IMR-90 (cell line): ENCODE measurements at regions of chr7 and their contacts with region 1.

Region 1: GRCh38 chr7:156969972-156970420 is 20.5 kb downstream of the NOM1 start:
- DNase-seq: peak; percentile 9
- ATAC-seq: peak; percentile 82
- H3K4me3 ChIP-seq: no peak overlapping the region
- H3K27ac ChIP-seq: no peak overlapping the region
- H3K4me1 ChIP-seq: no peaks in the 10 kb centered on the region
- H3K27me3 ChIP-seq: no peaks in the 10 kb centered on the region
- CTCF ChIP-seq: peak; percentile 45
- POLR2A ChIP-seq: no peak
- RAD21 ChIP-seq: peak; percentile 31; the same call in 1 of the 2 replicates

Region 2: DNA sequence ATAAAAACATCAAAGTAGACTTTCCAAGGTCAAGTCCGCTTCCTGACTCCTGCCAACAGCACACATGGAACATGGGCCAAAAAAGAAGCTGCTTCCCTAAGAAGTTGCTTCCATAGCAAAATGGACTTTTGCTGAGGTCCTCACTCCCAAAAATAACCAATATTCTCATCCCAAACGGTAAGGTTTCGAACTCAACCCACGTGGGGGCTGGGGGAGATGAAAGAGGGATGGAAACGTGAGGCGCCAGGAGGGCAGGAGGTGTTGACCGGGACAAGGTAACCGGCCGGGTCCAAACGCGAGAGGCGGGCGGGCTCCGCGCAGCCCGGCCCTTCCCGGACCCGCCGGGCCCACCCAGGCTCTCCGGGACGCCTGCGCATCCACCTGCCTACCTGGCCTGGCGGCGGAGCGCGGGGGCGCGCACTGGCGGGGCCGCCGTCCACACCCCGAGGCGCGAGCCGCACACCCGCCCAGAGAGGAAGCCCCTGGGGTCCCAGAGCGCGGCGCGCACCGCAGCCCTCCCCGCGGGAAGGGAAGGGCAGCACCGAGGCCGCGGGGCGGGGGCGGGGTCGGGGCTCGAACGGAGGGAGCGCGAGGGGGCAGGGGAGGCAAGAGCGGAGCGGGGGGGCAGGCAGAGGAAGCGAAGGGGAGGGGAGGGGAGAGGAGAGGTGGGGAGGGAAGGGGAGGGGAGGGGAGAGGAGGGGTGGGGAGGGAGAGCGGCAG is 77.8 kb before region 1 on chr7:
- CTCF ChIA-PET with region 1: no interaction called
- POLR2A ChIA-PET with region 1: no interaction called
- dilution Hi-C with region 1: no loop called
- in situ Hi-C with region 1: no loop called
- intact Hi-C with region 1: no loop called
- DNase-seq: no peak
- ATAC-seq: peak; percentile 30
- H3K4me3 ChIP-seq: peak overlapping the region; percentile 90
- H3K27ac ChIP-seq: no peak overlapping the region; the same call in 1 of the 2 replicates
- H3K4me1 ChIP-seq: peaks cover 2% of the 10 kb centered on the region; the same call in 1 of the 2 replicates
- H3K27me3 ChIP-seq: no peaks in the 10 kb centered on the region
- CTCF ChIP-seq: no peak
- POLR2A ChIP-seq: no peak
- RAD21 ChIP-seq: no peak

Region 3: DNA sequence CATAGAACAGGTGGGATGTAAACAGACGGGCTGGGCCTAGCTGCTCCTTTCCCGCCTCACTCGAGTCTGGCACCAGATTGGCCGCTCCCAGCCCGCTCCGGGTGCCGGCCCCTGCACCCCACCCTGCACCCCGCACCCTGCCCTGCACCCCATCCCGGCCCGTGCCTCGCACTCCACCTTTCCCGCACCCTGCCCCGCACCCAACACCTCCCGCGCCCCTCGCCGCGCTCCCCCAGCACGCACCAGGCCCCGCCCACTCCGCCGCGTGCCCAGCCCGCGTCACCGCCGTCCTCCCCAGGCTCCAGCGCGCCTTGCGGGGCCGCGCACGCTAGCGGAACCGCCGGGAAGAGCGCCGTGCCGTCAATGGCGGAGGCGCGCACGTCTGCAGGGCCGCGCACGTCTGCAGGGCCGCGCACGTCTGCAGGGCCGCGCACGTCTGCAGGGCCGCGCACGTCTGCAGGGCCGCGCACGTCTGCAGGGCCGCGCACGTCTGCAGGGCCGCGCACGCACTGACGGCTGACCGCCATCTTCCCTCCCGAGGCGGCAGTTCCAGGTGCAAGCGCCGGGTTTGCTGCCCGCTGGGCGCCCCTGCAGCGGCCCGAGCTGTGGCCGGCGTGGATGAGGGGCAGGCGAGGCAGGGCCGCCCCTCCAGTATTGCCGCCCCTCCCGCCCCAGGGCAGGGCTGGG is 168.6 kb after region 1 on chr7 and contains the start of gene UBE3C:
- CTCF ChIA-PET with region 1: no interaction called
- POLR2A ChIA-PET with region 1: no interaction called
- dilution Hi-C with region 1: no loop called
- in situ Hi-C with region 1: loop called (anchors 25 kb)
- intact Hi-C with region 1: loop called (anchors 5 kb)
- DNase-seq: peak; percentile 90
- ATAC-seq: peak; percentile 89
- H3K4me3 ChIP-seq: peak within 1 kb of the TSS; percentile 59
- H3K27ac ChIP-seq: peak within 1 kb of the TSS; percentile 89
- H3K4me1 ChIP-seq: peaks cover 11% of the 10 kb centered on the region
- H3K27me3 ChIP-seq: no peaks in the 10 kb centered on the region
- CTCF ChIP-seq: no peak
- POLR2A ChIP-seq: peak; percentile 70
- RAD21 ChIP-seq: no peak
- total RNA-seq, gene UBE3C: 60.6 and 88.6 TPM in 2 replicates

Region 4: DNA sequence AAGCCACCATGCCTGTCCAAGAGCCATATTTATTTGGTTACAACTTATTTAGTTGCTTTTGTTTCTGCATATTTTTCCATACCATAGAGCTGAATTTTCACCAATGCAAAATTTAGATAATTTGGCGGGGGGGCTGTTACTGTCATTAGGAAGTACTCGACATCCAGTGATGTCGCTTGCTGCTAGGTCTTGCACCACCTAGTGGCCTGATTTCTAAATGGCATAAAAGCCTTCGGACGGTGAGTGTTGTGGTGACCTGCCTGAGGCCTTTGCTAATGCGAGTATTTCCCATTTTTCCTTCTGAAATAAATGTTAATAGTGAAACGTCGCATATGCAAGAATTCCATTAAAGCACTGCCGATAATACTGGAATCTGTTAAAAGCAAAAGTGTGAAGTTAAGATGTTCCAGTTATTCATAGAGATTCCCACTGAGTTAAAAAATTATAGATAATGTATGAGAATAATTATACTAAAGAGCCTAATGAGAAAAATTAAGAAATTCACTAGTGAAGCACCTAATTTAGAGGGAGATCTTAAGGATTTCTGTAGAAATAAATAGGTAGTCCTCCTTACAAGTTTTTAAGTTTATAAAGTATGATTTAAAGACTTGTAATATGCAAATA is 280.7 kb after region 1 on chr7:
- CTCF ChIA-PET with region 1: interaction called, 3 read pairs
- POLR2A ChIA-PET with region 1: no interaction called
- dilution Hi-C with region 1: no loop called
- in situ Hi-C with region 1: loop called (anchors 25 kb)
- intact Hi-C with region 1: loop called (anchors 5 kb)
- DNase-seq: peak; percentile 66
- ATAC-seq: peak; percentile 73
- H3K4me3 ChIP-seq: no peak overlapping the region
- H3K27ac ChIP-seq: no peak overlapping the region
- H3K4me1 ChIP-seq: no peaks in the 10 kb centered on the region
- H3K27me3 ChIP-seq: no peaks in the 10 kb centered on the region
- CTCF ChIP-seq: peak; percentile 64
- POLR2A ChIP-seq: no peak
- RAD21 ChIP-seq: peak; percentile 51

Region 5: DNA sequence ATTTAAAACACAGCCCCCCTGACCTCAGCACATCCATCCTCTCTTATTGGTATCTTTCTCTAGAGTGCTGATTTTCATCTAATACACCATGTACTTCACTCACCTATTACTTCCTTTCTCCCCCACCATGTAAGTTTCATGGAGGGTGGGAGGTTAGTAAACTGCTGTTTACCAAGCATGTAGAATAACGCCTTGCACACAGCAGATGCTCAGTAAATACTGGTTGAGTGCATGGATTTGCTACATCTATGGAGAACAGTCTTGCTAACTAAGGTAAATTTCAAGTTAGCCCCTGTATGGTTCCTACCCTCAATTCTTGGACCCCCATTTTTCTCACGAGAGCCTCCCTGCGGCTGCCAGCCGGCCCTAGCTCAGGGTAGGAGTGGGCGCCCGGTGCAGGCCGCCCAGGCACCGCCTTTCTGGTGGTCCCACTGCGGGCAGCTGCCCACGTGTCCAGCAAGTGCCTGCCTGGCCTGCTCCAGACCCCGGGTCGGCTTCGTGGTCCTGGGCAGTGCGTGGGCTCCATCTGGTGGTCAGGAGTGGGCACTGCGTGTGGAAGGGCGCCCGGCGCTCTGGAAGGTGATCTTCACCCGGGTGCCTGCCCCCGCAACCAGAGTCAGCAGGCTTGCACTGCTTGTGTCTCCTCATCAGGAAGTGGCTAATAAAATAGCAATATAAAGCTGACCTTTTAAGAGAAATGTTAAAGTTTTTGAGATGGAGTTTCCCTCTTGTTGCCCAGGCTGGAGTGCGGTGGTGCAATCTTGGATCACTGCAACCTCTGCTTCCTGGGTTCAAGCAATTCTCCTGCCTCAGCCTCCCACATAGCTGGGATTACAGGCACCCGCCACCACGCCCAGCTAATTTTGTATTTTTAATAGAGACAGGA is 303.5 kb after region 1 on chr7:
- CTCF ChIA-PET with region 1: no interaction called
- POLR2A ChIA-PET with region 1: no interaction called
- dilution Hi-C with region 1: no loop called
- in situ Hi-C with region 1: loop called (anchors 25 kb)
- intact Hi-C with region 1: loop called (anchors 1 kb)
- DNase-seq: peak; percentile 74
- ATAC-seq: peak; percentile 73
- H3K4me3 ChIP-seq: no peak overlapping the region
- H3K27ac ChIP-seq: peak overlapping the region; percentile 93
- H3K4me1 ChIP-seq: peaks cover 22% of the 10 kb centered on the region
- H3K27me3 ChIP-seq: no peaks in the 10 kb centered on the region
- CTCF ChIP-seq: peak; percentile 96
- POLR2A ChIP-seq: no peak
- RAD21 ChIP-seq: peak; percentile 91

Region 6: GRCh38 chr7:157372235-157373232 is 402.5 kb after region 1 on chr7:
- CTCF ChIA-PET with region 1: no interaction called
- POLR2A ChIA-PET with region 1: no interaction called
- dilution Hi-C with region 1: no loop called
- in situ Hi-C with region 1: loop called (anchors 25 kb)
- intact Hi-C with region 1: loop called (anchors 10 kb)
- DNase-seq: no peak
- ATAC-seq: no peak
- H3K4me3 ChIP-seq: no peak overlapping the region
- H3K27ac ChIP-seq: no peak overlapping the region
- H3K4me1 ChIP-seq: peaks cover 2% of the 10 kb centered on the region; the same call in 1 of the 2 replicates
- H3K27me3 ChIP-seq: no peaks in the 10 kb centered on the region
- CTCF ChIP-seq: no peak
- POLR2A ChIP-seq: no peak
- RAD21 ChIP-seq: no peak